ENCODE measurements at regions of chr6 and their contacts with region 1.

Region 1: DNA sequence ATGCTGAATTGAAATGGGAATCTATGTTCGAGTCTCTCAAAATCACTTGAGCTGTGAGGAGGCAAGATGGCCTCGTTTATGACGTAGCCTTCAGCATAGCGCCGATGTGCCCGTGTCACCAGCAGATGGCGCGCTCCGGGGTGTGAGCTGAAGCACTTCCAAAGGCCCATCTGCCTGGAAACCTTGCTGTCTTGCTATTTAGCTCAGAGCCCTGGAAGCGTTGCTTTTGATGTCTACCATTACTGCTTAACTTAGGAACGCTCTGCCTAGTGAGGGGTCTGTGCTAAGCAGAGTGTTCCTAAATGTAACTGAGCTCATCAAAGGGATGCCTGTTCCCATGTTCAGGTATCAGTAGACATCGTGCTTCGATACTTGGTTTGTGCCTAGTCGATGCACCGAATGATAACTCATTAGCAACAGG is 67.7 kb downstream of the SYCP2L start:
- H3K4me3 ChIP-seq: no peak overlapping the region
- H3K27ac ChIP-seq: no peak overlapping the region
- H3K4me1 ChIP-seq: no peaks in the 10 kb centered on the region
- CTCF ChIP-seq: peak; percentile 80

Region 2: GRCh38 chr6:10979603-10980002 is 25.0 kb after region 1 on chr6:
- CTCF ChIA-PET with region 1: interaction called, 11 read pairs
- POLR2A ChIA-PET with region 1: no interaction called
- H3K4me3 ChIP-seq: no peak overlapping the region
- H3K27ac ChIP-seq: no peak overlapping the region
- H3K4me1 ChIP-seq: no peaks in the 10 kb centered on the region
- CTCF ChIP-seq: no peak

Region 3: DNA sequence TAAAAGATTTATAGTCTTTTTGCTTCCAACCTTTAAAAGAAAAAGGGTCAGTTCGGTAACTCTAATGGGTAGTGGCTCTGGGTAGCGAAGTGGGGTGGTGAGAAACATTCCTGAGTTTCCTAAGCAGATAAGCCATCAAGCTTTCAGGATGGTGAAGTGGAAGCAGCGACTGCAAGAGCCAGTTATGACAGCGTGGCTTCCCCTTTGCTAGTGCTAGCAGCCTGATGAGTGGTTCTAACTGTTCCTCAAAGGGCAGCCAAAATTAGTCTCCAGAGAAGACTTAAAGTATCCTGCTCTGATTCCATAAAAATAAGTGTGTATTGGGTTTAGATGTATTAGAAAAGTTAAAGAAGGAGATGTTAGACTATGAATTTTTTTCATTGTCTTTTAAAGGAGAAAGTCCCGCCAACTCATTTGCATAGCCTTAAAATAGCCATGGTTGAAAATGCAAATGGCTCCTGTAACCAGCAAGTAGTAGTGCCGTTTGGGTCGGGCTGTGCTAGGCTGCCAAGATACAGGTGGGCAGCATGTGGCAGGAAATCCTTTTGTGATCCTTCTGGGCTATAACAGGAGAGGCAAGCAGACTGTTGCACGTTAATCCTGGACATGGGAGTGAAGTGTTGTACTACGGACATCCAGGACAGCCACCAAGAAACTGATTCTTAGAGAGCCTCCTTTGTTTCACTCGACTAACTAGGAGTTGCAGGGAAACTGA is 71.5 kb after region 1 on chr6:
- CTCF ChIA-PET with region 1: interaction called, 12 read pairs
- POLR2A ChIA-PET with region 1: interaction called, 3 read pairs
- H3K4me3 ChIP-seq: no peak overlapping the region
- H3K27ac ChIP-seq: no peak overlapping the region
- H3K4me1 ChIP-seq: peaks cover 28% of the 10 kb centered on the region
- CTCF ChIP-seq: no peak

Region 4: DNA sequence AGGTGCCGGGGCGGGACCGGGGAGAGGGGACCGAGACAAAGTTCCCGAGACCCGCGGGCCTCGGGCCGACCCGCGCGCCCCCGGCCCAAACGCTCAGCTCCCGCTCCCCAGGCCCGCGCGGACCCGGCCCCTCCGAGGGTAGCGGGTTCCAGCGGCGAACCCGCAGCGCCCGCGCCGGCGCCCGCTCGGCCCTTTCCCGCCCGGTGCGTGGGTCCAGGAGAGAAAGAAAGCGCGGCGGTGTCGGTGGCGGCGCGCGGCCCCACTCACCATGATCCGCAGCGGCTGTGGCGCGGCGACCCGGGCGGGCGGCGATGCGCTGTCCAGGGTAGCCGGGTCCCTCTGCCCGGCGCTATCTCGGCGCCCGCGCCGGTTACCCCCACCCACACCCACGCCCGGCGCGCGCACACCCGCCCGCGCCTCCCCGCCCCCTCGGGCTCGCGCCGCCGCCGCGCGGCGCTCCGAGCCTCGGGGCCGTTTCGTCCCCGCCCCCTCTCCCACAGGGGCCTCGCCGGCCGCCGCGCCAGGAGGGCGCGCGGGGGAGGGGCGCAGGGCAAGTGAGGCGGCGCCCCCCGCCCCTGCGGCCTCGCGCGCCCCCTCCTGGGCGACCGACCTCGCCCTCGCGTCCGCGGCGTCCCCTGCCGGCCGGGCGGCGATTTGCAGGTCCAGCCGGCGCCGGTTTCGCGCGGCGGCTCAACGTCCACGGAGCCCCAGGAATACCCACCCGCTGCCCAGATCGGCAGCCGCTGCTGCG is 89.5 kb after region 1 on chr6 and contains the start of gene ELOVL2:
- CTCF ChIA-PET with region 1: interaction called, 29 read pairs
- POLR2A ChIA-PET with region 1: no interaction called
- H3K4me3 ChIP-seq: peak within 1 kb of the TSS; percentile 75
- H3K27ac ChIP-seq: peak within 1 kb of the TSS; percentile 71; the same call in 1 of the 2 replicates
- H3K4me1 ChIP-seq: peaks cover 7% of the 10 kb centered on the region; the same call in 1 of the 2 replicates
- CTCF ChIP-seq: peak; percentile 18; the same call in 1 of the 2 replicates

Region 5: DNA sequence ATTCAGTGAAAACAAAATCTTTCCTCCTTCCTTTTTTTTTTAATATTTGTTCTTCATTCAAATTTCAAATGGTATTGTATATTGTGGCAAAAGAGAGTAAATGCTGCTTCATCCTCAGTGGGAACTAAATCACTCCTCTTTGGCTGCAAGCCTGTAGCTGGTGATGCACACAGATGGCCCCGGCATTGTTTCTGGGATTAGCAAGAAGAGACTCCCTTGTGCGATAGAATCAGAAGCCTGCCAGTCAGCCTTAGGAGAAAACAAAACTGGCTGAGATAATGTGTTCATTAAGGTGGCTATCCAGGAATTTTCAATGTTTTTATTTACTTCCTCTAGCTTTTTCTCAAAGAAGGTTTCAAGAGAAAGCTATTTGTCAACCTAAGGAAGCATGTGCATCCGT is 110.2 kb after region 1 on chr6:
- CTCF ChIA-PET with region 1: interaction called, 174 read pairs
- POLR2A ChIA-PET with region 1: interaction called, 5 read pairs
- H3K4me3 ChIP-seq: no peak overlapping the region
- H3K27ac ChIP-seq: no peak overlapping the region
- H3K4me1 ChIP-seq: 0 out of 2 replicates have a peak, but pooled peaks cover 2% of the 10 kb centered on the region
- CTCF ChIP-seq: no peak